ENCODE measurements at regions of chr17 and their contacts with region 1.

Region 1: GRCh38 chr17:43367737-43368242 is 31.0 kb upstream of the ARL4D start:
- DNase-seq: peak in 2 of 5 donors; percentile 42 to 48
- H3K4me3 ChIP-seq: peak overlapping the region; percentile 62
- H3K27ac ChIP-seq: peak overlapping the region; percentile 99
- H3K4me1 ChIP-seq: peaks cover 8% of the 10 kb centered on the region
- H3K27me3 ChIP-seq: no peaks in the 10 kb centered on the region
- CTCF ChIP-seq: peak in 1 of 3 donors; percentile 3
- EP300 ChIP-seq: no peak
- POLR2A ChIP-seq: no peak

Region 2: DNA sequence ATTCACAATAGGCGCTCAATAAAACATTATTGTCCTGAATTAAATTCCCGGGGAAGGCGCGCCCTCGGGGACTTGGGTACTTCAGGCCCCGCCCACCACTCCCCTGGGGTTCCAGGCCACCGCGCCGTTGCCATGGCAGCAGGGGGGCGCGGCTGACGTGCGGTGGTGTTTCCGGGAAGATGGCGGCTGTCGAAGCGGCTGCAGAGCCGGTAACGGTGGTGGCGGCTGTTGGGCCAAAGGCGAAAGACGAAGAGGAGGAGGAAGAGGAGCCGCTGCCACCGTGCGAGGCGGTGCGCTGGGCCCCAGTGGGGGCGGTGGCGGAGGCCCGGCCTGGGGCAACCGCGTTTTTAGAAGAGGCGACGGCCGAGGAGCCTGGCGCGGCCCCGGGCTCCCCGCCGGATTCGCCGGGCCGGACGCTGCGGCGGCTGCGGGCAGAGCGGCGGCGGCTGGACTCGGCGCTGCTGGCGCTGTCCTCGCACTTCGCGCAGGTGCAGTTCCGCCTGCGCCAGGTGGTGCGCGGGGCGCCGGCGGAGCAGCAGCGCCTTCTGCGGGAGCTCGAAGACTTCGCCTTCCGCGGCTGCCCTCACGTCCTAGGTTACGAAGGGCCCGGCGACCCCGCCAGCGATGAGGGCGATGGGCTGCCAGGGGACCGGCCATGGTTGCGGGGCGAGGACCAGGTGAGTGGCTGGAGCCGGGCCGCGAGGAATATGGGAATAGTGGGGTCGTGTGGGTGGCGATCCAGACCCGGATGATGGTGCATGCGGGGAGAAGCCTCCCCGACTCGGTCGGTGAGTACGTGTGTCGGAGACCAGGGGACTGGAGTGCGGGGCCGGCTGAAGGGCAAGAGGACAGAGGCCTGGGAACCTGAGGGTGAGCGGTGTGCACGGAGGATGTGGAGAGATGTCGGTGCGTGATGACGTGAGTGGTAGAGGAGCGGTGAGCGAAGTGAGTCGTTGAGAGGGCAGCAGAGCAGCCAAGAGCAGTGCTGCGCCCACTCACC is 387.1 kb before region 1 on chr17 and contains the start of gene RUNDC1:
- intact Hi-C with region 1: no loop called
- DNase-seq: peak; percentile 87 to 92 (median 90)
- H3K4me3 ChIP-seq: peak within 1 kb of the TSS; percentile 79
- H3K27ac ChIP-seq: peak within 1 kb of the TSS in 1 of 2 donors; percentile 46
- H3K4me1 ChIP-seq: peaks cover 7% of the 10 kb centered on the region
- H3K27me3 ChIP-seq: no peaks in the 10 kb centered on the region
- CTCF ChIP-seq: peak in 1 of 3 donors; percentile 12
- EP300 ChIP-seq: no peak
- POLR2A ChIP-seq: no peak
- total RNA-seq, gene RUNDC1: 8.2 to 19.4 (median 13.3) TPM

Region 3: GRCh38 chr17:43388359-43389045 is 20.7 kb after region 1 on chr17:
- intact Hi-C with region 1: loop called in 1 of 4 experiments (anchors 2 kb)
- DNase-seq: peak; percentile 92 to 95 (median 94)
- H3K4me3 ChIP-seq: peak overlapping the region; percentile 82
- H3K27ac ChIP-seq: peak overlapping the region; percentile 92 to 99
- H3K4me1 ChIP-seq: no peaks in the 10 kb centered on the region
- H3K27me3 ChIP-seq: no peaks in the 10 kb centered on the region
- CTCF ChIP-seq: peak in 2 of 3 donors; percentile 12 to 26
- EP300 ChIP-seq: no peak
- POLR2A ChIP-seq: peak; percentile 96

Measured in ovary (tissue), 10 donors.